Heart right ventricle (tissue), 16 donors: ENCODE measurements at regions of chr2 and their contacts with region 1.

Region 1: GRCh38 chr2:28392297-28393113 is at the start of gene FOSL2:
- DNase-seq: peak; percentile 94 to 98
- ATAC-seq: peak; percentile 70 to 85 (median 74)
- H3K4me3 ChIP-seq: peak within 1 kb of the TSS; percentile 56 to 99 (median 98)
- H3K27ac ChIP-seq: peak within 1 kb of the TSS; percentile 99 to 100 (median 100)
- H3K4me1 ChIP-seq: peaks cover 0 to 45% (median 28%) of the 10 kb centered on the region in 9 donors
- H3K27me3 ChIP-seq: no peaks in the 10 kb centered on the region
- CTCF ChIP-seq: peak in 1 of 9 donors; percentile 4
- total RNA-seq, gene FOSL2: 29.7 to 182 (median 60.3) TPM

Region 2: GRCh38 chr2:27723372-27724144 is 668.9 kb before region 1 on chr2:
- intact Hi-C with region 1: loop called in 3 of 10 experiments (anchors 5 kb)
- DNase-seq: peak; percentile 43 to 72
- ATAC-seq: peak; percentile 50 to 80 (median 72)
- H3K4me3 ChIP-seq: no peak overlapping the region
- H3K27ac ChIP-seq: peak overlapping the region in 9 of 10 donors; percentile 49 to 84 (median 73)
- H3K4me1 ChIP-seq: peaks cover 4 to 60% (median 42%) of the 10 kb centered on the region in 9 donors
- H3K27me3 ChIP-seq: no peaks in the 10 kb centered on the region
- CTCF ChIP-seq: peak; percentile 69 to 91 (median 85)

Region 3: DNA sequence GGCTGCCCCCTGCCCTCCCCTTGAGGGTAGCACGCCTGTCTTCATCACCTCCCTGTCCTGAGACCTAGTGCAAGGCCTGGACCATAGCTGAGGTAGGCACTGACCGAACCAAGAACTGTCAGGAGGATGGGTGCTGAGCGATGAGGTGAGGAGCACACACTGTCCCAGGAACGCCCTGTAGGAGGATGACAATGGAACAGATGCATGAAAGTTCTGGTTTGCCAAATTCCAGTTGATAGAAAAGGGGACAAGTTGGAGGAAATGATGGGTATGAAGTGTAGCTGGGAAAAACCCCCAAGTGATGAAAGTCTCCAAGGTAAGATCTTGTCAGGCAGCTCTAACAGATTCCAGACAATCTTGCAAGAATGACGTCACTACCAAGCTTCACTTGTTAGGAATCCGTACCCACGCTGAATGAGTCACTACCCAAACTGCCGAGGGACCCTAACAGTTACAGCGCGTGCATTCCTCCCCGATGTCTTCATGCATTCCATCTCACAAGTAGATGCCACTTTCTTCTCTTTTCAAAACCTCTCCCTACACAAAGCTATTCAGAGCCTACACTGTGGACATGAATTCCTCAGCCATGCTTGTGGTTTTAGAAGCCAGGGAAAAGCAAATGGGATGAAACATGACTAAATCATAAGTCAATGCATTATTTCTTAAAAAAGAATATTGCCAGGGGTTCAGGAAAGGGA is 593.4 kb before region 1 on chr2:
- intact Hi-C with region 1: loop called in 2 of 10 experiments (anchors 5 to 10 kb)
- DNase-seq: peak in 1 of 2 donors; percentile 61
- ATAC-seq: peak in 7 of 8 donors; percentile 26 to 76 (median 60)
- H3K4me3 ChIP-seq: no peak overlapping the region
- H3K27ac ChIP-seq: peak overlapping the region in 9 of 10 donors; percentile 57 to 98 (median 91)
- H3K4me1 ChIP-seq: peaks cover 9 to 76% (median 55%) of the 10 kb centered on the region in 9 donors
- H3K27me3 ChIP-seq: no peaks in the 10 kb centered on the region
- CTCF ChIP-seq: no peak

Region 4: DNA sequence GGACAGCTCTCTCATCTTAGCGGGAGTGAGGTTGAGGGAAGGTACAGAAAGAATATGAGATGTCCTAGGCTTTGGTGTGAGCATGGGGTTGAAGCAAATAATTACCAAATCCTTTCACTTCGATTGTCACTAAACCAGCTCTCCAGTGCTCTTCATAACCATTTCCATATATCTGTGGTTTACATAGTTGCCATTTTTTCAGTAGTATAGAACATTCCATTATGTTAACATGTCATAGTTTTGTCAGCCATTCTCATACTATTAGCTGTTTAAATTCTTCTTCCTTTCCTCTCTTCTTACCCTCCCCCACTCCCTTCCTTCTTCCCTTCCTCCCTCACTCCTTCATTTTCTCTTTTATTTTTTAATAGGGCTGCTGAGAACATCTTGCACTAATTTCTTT is 296.1 kb before region 1 on chr2:
- intact Hi-C with region 1: loop called in 3 of 10 experiments (anchors 5 to 10 kb)
- DNase-seq: no peak
- ATAC-seq: no peak
- H3K4me3 ChIP-seq: no peak overlapping the region
- H3K27ac ChIP-seq: peak overlapping the region in 1 of 10 donors; percentile 23
- H3K4me1 ChIP-seq: peaks cover 0 to 51% (median 13%) of the 10 kb centered on the region in 9 donors
- H3K27me3 ChIP-seq: no peaks in the 10 kb centered on the region
- CTCF ChIP-seq: no peak

Region 5: GRCh38 chr2:28219138-28219537 is 173.4 kb before region 1 on chr2:
- intact Hi-C with region 1: loop called in 1 of 10 experiments (anchors 10 kb)
- DNase-seq: no peak
- ATAC-seq: no peak
- H3K4me3 ChIP-seq: no peak overlapping the region
- H3K27ac ChIP-seq: no peak overlapping the region
- H3K4me1 ChIP-seq: peaks cover 0 to 14% (median 0%) of the 10 kb centered on the region in 9 donors
- H3K27me3 ChIP-seq: no peaks in the 10 kb centered on the region
- CTCF ChIP-seq: no peak

Region 6: GRCh38 chr2:28342081-28342967 is 50.2 kb before region 1 on chr2:
- intact Hi-C with region 1: loop called in 4 of 10 experiments (anchors 2 to 5 kb)
- DNase-seq: peak; percentile 43 to 50
- ATAC-seq: peak; percentile 44 to 70 (median 62)
- H3K4me3 ChIP-seq: peak overlapping the region in 4 of 10 donors; percentile 8 to 33 (median 18)
- H3K27ac ChIP-seq: peak overlapping the region; percentile 26 to 81 (median 62)
- H3K4me1 ChIP-seq: peaks cover 3 to 59% (median 40%) of the 10 kb centered on the region in 9 donors
- H3K27me3 ChIP-seq: no peaks in the 10 kb centered on the region
- CTCF ChIP-seq: no peak